Dendritic cell treated with granulocyte-macrophage colony-stimulating factor and Interleukin-4, amounts not matched to agents 40 ng/mL and 50 ng/mL, for 4 days (primary cell): ENCODE measurements at regions of chr4 and their contacts with region 1.

Region 1: GRCh38 chr4:176065435-176066291 is at the start of gene WDR17:
- H3K4me3 Mint-ChIP-seq: peak within 1 kb of the TSS; percentile 93
- H3K27ac Mint-ChIP-seq: peak within 1 kb of the TSS; percentile 47
- H3K4me1 Mint-ChIP-seq: peaks cover 13% of the 10 kb centered on the region
- H3K27me3 Mint-ChIP-seq: peaks cover 18% of the 10 kb centered on the region

Region 2: GRCh38 chr4:175166020-175166419 is 899.6 kb before region 1 on chr4:
- intact Hi-C with region 1: no loop called
- H3K4me3 Mint-ChIP-seq: no peak overlapping the region
- H3K27ac Mint-ChIP-seq: no peak overlapping the region
- H3K4me1 Mint-ChIP-seq: no peaks in the 10 kb centered on the region
- H3K27me3 Mint-ChIP-seq: no peaks in the 10 kb centered on the region

Region 3: DNA sequence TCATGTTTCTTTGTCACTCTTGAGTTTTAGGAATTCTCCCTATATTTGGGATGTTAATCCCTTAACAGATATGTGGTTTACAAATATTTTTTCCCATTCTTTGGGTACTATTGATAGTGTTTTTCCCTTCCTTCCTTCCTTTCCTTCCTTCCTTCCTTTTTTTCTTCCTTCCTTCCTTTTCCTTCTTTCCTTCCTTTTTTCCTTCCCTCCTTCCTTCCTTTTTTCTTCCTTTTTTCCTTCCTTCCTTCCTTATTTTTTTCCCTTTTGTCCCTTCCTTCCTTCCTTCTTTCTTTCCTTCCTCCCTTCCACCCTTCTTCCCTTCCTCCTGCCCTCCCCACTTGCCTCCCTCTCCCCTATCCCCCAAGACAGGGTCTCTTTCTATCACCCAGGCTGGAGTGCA is 42.0 kb after region 1 on chr4:
- intact Hi-C with region 1: no loop called
- H3K4me3 Mint-ChIP-seq: no peak overlapping the region
- H3K27ac Mint-ChIP-seq: no peak overlapping the region
- H3K4me1 Mint-ChIP-seq: no peaks in the 10 kb centered on the region
- H3K27me3 Mint-ChIP-seq: no peaks in the 10 kb centered on the region

Region 4: GRCh38 chr4:176195184-176195978 is 129.7 kb after region 1 on chr4 and contains the start of gene SPATA4:
- intact Hi-C with region 1: loop called (anchors 5 kb)
- H3K4me3 Mint-ChIP-seq: peak within 1 kb of the TSS; percentile 91
- H3K27ac Mint-ChIP-seq: peak within 1 kb of the TSS; percentile 88
- H3K4me1 Mint-ChIP-seq: peaks cover 11% of the 10 kb centered on the region
- H3K27me3 Mint-ChIP-seq: peaks cover 12% of the 10 kb centered on the region

Region 5: GRCh38 chr4:176357359-176358082 is 291.9 kb after region 1 on chr4:
- intact Hi-C with region 1: no loop called
- H3K4me3 Mint-ChIP-seq: no peak overlapping the region
- H3K27ac Mint-ChIP-seq: no peak overlapping the region
- H3K4me1 Mint-ChIP-seq: no peaks in the 10 kb centered on the region
- H3K27me3 Mint-ChIP-seq: no peaks in the 10 kb centered on the region